Ovary (tissue), 10 donors: ENCODE measurements at regions of chr10 and their contacts with region 1.

Region 1: GRCh38 chr10:85848756-85849155 is 517.8 kb downstream of the GRID1 start:
- DNase-seq: no peak
- H3K4me3 ChIP-seq: no peak overlapping the region
- H3K27ac ChIP-seq: no peak overlapping the region
- H3K4me1 ChIP-seq: no peaks in the 10 kb centered on the region
- H3K27me3 ChIP-seq: no peaks in the 10 kb centered on the region
- CTCF ChIP-seq: no peak
- EP300 ChIP-seq: no peak
- POLR2A ChIP-seq: no peak

Region 2: GRCh38 chr10:85862771-85863170 is 14.0 kb after region 1 on chr10:
- intact Hi-C with region 1: loop called in 1 of 4 experiments (anchors 2 kb)
- DNase-seq: no peak
- H3K4me3 ChIP-seq: no peak overlapping the region
- H3K27ac ChIP-seq: no peak overlapping the region
- H3K4me1 ChIP-seq: no peaks in the 10 kb centered on the region
- H3K27me3 ChIP-seq: no peaks in the 10 kb centered on the region
- CTCF ChIP-seq: no peak
- EP300 ChIP-seq: no peak
- POLR2A ChIP-seq: no peak

Region 3: GRCh38 chr10:86399879-86400704 is 551.3 kb after region 1 on chr10:
- intact Hi-C with region 1: no loop called
- DNase-seq: peak; percentile 84 to 93 (median 88)
- H3K4me3 ChIP-seq: peak overlapping the region; percentile 63
- H3K27ac ChIP-seq: peak overlapping the region; percentile 35 to 53
- H3K4me1 ChIP-seq: peaks cover 10% of the 10 kb centered on the region
- H3K27me3 ChIP-seq: no peaks in the 10 kb centered on the region
- CTCF ChIP-seq: peak; percentile 64 to 75 (median 68)
- EP300 ChIP-seq: no peak
- POLR2A ChIP-seq: no peak